Thyroid gland (tissue), 4 donors: ENCODE measurements at regions of chr3 and their contacts with region 1.

Region 1: GRCh38 chr3:40179016-40179415 is 130.5 kb upstream of the EIF1B start:
- DNase-seq: peak; percentile 82 to 88
- H3K4me3 ChIP-seq: no peak overlapping the region
- H3K27ac ChIP-seq: no peak overlapping the region
- H3K4me1 ChIP-seq: peaks cover 0 to 11% of the 10 kb centered on the region in 2 donors
- H3K27me3 ChIP-seq: no peaks in the 10 kb centered on the region
- CTCF ChIP-seq: peak; percentile 39 to 79 (median 73)
- POLR2A ChIP-seq: no peak

Region 2: DNA sequence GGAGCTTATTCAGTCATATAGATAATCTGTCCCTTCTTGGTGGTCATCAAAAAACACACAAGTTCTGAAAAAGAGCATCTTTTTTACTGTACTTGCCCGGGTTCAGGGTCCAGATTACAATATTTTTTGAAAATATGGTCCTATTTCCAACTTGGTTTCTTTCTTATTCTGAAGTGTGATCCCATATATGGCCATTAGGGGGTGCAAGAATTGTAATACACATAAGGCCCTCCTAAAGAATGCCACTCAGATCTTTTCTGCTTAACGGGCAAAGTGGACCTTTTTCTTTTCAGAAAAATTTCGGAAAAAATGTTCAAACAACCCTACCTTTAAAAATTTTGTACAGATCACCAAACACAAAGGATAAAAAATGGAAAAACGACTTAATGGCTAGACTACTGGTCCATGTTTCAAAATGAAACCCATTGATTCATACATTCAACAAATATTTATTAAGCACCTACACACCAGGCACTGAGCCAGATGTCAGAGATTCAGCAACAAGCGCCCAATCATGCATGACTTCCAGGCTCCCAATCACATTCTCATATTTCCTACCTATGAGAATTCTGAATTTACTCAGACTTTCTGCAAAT is 471.6 kb before region 1 on chr3:
- intact Hi-C with region 1: loop called (anchors 5 kb)
- DNase-seq: peak in 1 of 2 donors; percentile 6
- H3K4me3 ChIP-seq: no peak overlapping the region
- H3K27ac ChIP-seq: no peak overlapping the region
- H3K4me1 ChIP-seq: no peaks in the 10 kb centered on the region
- H3K27me3 ChIP-seq: no peaks in the 10 kb centered on the region
- CTCF ChIP-seq: peak in 5 of 6 experiments; percentile 32 to 77 (median 62)
- POLR2A ChIP-seq: no peak

Region 3: DNA sequence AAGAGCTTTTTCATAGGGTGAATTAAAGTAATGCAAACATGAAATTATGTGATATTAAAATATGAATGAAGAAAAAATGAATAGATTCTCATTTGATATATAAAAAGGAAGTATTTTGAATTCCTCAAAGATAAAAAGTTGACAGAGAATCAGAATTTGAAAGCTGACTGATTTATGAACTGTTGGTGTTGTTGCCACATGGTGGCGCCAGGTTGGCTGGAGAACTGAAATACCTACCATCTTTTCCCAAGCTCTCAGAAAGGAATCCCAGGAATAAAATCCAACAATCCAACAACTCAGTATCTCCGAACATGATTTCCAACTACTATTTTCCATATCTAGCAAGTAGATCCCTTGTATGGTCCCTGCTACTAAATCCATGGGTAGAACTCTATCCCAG is 366.5 kb before region 1 on chr3:
- intact Hi-C with region 1: loop called (anchors 5 kb)
- DNase-seq: peak; percentile 15 to 50
- H3K4me3 ChIP-seq: no peak overlapping the region
- H3K27ac ChIP-seq: no peak overlapping the region
- H3K4me1 ChIP-seq: peaks cover 0 to 10% of the 10 kb centered on the region in 2 donors
- H3K27me3 ChIP-seq: no peaks in the 10 kb centered on the region
- CTCF ChIP-seq: peak in 4 of 6 experiments; percentile 18 to 46 (median 40)
- POLR2A ChIP-seq: no peak